ENCODE measurements at regions of chr11 and their contacts with region 1.

Region 1: DNA sequence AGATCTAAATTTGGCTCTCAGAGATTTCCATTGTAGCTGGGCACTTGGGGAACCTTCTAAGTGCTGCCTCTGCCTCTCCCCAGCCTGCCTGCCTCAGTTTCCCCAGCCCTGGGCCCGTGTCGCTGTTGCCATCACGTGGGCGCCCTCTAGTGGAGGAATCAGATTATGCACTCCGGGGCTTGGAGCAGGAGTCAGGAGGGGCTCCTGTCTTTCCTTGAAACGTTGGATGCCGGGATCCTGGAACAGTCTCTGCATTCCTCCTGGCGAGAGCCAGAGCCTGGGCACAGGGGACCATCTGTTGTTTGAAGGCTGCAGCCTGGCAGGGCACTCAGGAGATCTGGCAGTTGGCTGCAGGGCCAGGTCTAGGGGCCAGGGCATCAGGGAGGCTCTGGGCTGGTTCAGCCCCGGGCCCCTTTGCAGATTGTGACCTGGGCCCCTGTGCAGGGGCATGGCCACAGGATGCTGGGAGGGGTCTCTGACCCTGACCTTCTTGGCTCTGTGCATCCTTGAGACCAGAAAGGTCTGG is 71.6 kb downstream of the LRP5 start:
- DNase-seq: peak in 3 of 5 donors; percentile 63 to 75 (median 71)
- H3K4me3 ChIP-seq: no peak overlapping the region
- H3K27ac ChIP-seq: no peak overlapping the region
- H3K4me1 ChIP-seq: peaks cover 6 to 27% (median 13%) of the 10 kb centered on the region in 3 donors
- H3K27me3 ChIP-seq: no peaks in the 10 kb centered on the region
- CTCF ChIP-seq: peak; percentile 84

Region 2: DNA sequence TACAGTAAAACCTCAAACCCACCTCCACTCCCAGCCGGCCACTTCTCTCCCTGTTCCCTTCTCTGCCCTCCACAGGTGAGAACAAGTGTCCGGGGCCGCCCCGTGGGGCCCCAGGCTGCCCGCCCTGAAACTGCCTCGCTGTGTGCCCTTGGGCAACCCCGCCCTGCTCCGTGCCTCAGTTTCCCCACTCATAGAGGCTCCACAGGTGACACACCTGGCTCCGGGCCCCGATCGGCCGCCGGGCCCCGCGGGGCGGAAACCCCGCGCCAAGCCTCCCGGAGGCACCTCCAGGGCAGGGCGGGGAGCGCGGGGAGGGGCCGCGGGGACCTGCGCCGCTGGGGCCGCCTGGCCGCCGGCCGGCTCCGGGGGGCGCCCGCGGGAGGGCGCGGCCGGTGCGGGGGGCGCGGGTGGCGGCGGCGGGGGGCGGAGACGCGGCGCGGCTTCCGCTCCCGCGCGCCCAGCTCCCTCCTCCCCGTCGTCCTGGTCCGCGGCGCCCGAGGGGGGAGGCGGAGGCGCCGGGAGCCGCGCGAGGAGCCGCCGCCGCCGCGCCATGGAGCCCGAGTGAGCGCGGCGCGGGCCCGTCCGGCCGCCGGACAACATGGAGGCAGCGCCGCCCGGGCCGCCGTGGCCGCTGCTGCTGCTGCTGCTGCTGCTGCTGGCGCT is 71.8 kb before region 1 on chr11 and contains the start of gene LRP5:
- intact Hi-C with region 1: loop called (anchors 10 kb)
- DNase-seq: peak in 3 of 5 donors; percentile 47 to 80 (median 72)
- H3K4me3 ChIP-seq: peak within 1 kb of the TSS; percentile 61 to 70 (median 67)
- H3K27ac ChIP-seq: peak within 1 kb of the TSS; percentile 67 to 88
- H3K4me1 ChIP-seq: peaks cover 4 to 30% (median 15%) of the 10 kb centered on the region in 3 donors
- H3K27me3 ChIP-seq: no peaks in the 10 kb centered on the region
- CTCF ChIP-seq: no peak
- total RNA-seq, gene LRP5: 71.3 TPM